ENCODE measurements at regions of chr3 and their contacts with region 1.

Region 1: GRCh38 chr3:124928333-124929202 is 6.0 kb downstream of the MUC13 start:
- DNase-seq: peak; percentile 39 to 64
- H3K4me3 ChIP-seq: no peak overlapping the region
- H3K27ac ChIP-seq: no peak overlapping the region
- H3K4me1 ChIP-seq: no peaks in the 10 kb centered on the region
- H3K27me3 ChIP-seq: no peaks in the 10 kb centered on the region
- CTCF ChIP-seq: peak; percentile 85

Region 2: GRCh38 chr3:124986158-124987143 is 57.9 kb after region 1 on chr3:
- CTCF ChIA-PET with region 1: no interaction called
- POLR2A ChIA-PET with region 1: no interaction called
- intact Hi-C with region 1: loop called (anchors 1 kb)
- DNase-seq: peak; percentile 75 to 87
- H3K4me3 ChIP-seq: no peak overlapping the region
- H3K27ac ChIP-seq: peak overlapping the region; percentile 83
- H3K4me1 ChIP-seq: peaks cover 28% of the 10 kb centered on the region
- H3K27me3 ChIP-seq: no peaks in the 10 kb centered on the region
- CTCF ChIP-seq: peak; percentile 74

Region 3: DNA sequence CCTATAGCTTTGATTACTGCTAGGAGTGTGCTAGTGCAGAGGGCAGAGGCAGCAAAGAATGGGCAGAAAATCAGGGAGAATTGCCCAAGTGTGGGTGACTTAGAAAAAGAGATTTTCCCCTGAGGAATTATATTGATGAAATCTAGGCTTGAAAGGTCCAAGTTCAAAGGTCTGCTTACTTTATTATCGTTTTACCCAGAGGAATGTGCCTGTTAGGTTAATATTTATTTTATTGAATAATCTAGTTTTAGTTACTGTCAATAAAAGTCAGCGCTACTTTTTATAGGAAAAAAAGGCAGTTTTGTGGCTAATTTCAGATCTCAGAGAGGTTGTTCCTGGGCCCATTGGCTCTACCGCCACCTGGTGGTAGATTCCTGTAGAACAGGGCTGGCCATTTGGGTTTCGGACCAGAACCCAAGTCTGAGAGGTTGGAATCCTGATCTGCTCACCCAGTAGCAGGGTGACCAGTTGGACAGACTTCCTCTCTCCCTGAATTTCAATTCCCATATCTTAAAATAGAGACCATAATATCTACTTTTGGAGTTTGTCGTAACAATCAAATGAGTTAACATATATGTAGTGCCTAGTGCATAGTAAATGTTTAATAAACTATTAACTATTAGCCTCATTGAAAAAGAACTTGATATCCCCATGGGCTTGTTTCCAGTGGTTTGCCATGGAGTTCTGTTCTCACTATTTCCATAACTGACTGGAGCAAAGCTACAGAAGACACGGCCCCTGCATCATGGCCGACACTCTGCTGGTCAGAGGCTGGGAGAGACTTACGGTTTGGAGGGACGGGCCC is 509.3 kb after region 1 on chr3:
- CTCF ChIA-PET with region 1: interaction called, 3 read pairs
- POLR2A ChIA-PET with region 1: no interaction called
- intact Hi-C with region 1: loop called (anchors 2 kb)
- DNase-seq: peak in 1 of 2 experiments; percentile 51
- H3K4me3 ChIP-seq: no peak overlapping the region
- H3K27ac ChIP-seq: no peak overlapping the region
- H3K4me1 ChIP-seq: peaks cover 8% of the 10 kb centered on the region
- H3K27me3 ChIP-seq: no peaks in the 10 kb centered on the region
- CTCF ChIP-seq: peak; percentile 99

Region 4: GRCh38 chr3:125585595-125586223 is 657.1 kb after region 1 on chr3:
- CTCF ChIA-PET with region 1: no interaction called
- POLR2A ChIA-PET with region 1: no interaction called
- intact Hi-C with region 1: loop called (anchors 1 kb)
- DNase-seq: peak; percentile 55 to 56
- H3K4me3 ChIP-seq: no peak overlapping the region
- H3K27ac ChIP-seq: no peak overlapping the region
- H3K4me1 ChIP-seq: no peaks in the 10 kb centered on the region
- H3K27me3 ChIP-seq: no peaks in the 10 kb centered on the region
- CTCF ChIP-seq: peak; percentile 84

Measured in PC-9 (cell line).